ENCODE measurements at regions of chr6 and their contacts with region 1.

Region 1: DNA sequence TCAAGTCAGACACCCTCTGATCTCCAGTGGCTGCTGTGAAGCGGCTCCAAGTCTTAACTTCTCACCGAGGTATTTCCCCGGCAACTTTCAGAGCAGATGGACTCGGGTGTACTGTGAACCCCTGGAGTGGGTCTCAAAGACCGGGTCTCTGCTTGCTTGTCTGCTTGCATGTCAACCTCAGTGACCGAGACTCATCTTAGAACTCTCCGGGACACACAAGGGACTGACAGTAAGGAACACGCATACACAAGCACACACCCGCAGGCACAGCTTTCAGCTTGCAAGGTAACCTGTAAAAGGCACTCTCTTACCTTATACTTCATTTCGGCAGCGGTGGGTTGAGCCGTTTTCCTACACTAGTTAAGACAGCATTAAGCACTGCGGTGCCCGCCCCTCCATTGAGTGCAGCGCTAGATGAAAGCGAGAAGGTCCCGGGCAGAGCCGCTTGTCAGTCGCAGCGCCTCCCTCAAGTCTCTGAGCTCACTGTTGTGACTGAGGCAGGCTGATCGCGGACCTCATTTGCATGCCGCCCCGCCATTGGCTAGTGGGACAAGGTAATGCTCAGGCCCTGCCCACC is at the start of gene NEDD9:
- DNase-seq: peak; percentile 93
- H3K4me3 Mint-ChIP-seq: peak within 1 kb of the TSS; percentile 98
- H3K27ac Mint-ChIP-seq: peak within 1 kb of the TSS; percentile 96
- H3K4me1 Mint-ChIP-seq: peaks cover 86% of the 10 kb centered on the region
- H3K27me3 Mint-ChIP-seq: no peaks in the 10 kb centered on the region
- total RNA-seq, gene NEDD9: 53.2 and 62.1 TPM in 2 replicates

Region 2: GRCh38 chr6:10837995-10838793 is 394.1 kb before region 1 on chr6 and contains the start of gene MAK:
- intact Hi-C with region 1: loop called (anchors 2 kb)
- DNase-seq: peak; percentile 88
- H3K4me3 Mint-ChIP-seq: peak within 1 kb of the TSS; percentile 85
- H3K27ac Mint-ChIP-seq: peak within 1 kb of the TSS; percentile 99
- H3K4me1 Mint-ChIP-seq: peaks cover 23% of the 10 kb centered on the region
- H3K27me3 Mint-ChIP-seq: peaks cover 32% of the 10 kb centered on the region
- total RNA-seq, gene MAK: 0.67 and 0.73 TPM in 2 replicates

Region 3: GRCh38 chr6:11202513-11203305 is 29.6 kb before region 1 on chr6:
- intact Hi-C with region 1: loop called (anchors 1 kb)
- DNase-seq: peak; percentile 43
- H3K4me3 Mint-ChIP-seq: peak overlapping the region; percentile 54
- H3K27ac Mint-ChIP-seq: peak overlapping the region; percentile 92
- H3K4me1 Mint-ChIP-seq: peaks cover 86% of the 10 kb centered on the region
- H3K27me3 Mint-ChIP-seq: no peaks in the 10 kb centered on the region

Region 4: DNA sequence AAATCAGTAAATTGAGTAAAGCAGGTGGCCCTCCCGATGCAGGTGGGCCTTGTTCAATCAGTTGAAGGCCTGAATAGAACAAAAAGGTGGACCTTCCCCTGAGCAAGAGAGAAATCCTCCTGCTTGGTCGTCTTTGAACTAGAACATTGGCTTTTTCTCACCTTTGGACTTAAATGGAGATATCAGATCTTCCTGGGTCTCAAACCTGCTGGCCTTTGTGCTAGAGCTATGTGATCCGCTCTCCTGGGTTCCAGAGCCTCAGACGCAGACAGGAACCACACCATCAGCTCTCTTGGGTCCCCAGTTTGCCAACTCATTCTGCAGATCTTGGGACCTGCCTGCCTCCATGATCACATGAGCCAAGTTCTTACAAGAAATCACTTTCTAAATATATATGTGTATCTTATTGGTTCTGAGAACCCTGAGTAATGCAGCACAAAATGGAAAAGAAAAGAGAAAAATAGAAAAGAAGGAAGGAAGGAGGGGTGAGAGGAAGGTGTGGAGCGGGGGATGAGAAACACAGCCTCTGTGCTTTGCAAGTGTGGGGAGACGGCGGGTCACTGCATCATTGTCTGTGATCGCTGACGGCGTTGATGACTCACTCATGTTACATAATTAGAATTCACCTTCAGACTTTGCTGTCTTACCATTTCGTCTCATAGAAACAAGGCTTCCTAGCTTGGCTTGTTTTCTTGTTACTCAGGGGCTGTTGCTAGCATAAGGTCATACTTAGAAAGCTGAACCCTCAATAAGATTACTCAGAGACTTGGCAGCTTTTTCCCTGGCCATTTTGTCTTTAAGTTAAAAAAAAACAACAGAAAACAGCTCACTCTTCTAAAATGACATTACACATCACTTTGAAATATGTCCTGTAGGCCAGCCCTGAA is 85.8 kb after region 1 on chr6:
- intact Hi-C with region 1: loop called (anchors 1 kb)
- DNase-seq: peak; percentile 63
- H3K4me3 Mint-ChIP-seq: no peak overlapping the region
- H3K27ac Mint-ChIP-seq: peak overlapping the region; percentile 92
- H3K4me1 Mint-ChIP-seq: peaks cover 64% of the 10 kb centered on the region
- H3K27me3 Mint-ChIP-seq: no peaks in the 10 kb centered on the region

Region 5: GRCh38 chr6:11366183-11366933 is 134.1 kb after region 1 on chr6:
- intact Hi-C with region 1: loop called (anchors 1 kb)
- DNase-seq: peak; percentile 60
- H3K4me3 Mint-ChIP-seq: peak overlapping the region; percentile 55
- H3K27ac Mint-ChIP-seq: peak overlapping the region; percentile 92
- H3K4me1 Mint-ChIP-seq: peaks cover 95% of the 10 kb centered on the region
- H3K27me3 Mint-ChIP-seq: no peaks in the 10 kb centered on the region

Region 6: DNA sequence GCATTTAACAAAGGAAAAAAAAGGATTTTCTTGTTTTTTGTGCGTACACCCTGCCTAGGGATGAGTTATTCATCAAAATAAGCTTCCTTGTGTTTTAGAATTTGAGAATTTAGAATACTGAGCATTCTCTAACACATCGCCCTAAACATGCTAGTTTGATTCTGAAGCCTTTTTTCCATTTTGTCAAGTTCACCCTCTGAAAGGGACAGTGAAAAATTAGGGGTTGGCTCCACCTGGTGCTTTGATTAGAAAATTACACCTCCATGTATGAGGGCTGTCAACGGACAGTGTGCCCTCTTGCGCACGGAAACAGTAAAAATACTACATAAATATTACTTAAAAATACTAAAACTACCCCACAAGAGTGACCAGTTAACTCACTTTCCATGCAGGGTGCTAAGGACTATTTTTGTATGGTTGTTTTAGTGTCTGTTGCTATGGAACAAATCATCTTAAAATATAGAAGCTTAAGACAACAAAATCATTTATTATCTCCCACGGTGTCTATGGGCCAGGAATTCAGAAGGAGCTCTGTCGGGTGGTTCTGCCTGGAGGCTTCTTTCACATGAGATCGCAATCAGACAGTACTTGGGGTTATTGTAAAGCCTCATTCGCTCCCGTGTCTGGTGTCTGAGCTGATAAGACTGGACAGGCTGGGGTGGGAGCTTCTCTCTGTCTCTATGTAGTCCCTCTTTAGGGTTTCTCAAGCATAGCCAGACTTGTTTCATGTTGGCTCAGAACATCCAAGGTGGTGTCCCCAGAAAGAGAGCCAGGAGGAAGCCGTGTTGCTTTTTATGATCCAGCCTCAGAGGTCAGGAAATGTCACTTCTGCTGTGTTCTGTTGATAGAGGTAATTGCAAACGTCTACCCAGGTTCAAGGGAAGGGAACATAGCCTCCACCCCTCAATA is 264.1 kb after region 1 on chr6:
- intact Hi-C with region 1: loop called (anchors 1 kb)
- DNase-seq: peak; percentile 72
- H3K4me3 Mint-ChIP-seq: no peak overlapping the region
- H3K27ac Mint-ChIP-seq: no peak overlapping the region
- H3K4me1 Mint-ChIP-seq: peaks cover 26% of the 10 kb centered on the region
- H3K27me3 Mint-ChIP-seq: peaks cover 3% of the 10 kb centered on the region

Region 7: DNA sequence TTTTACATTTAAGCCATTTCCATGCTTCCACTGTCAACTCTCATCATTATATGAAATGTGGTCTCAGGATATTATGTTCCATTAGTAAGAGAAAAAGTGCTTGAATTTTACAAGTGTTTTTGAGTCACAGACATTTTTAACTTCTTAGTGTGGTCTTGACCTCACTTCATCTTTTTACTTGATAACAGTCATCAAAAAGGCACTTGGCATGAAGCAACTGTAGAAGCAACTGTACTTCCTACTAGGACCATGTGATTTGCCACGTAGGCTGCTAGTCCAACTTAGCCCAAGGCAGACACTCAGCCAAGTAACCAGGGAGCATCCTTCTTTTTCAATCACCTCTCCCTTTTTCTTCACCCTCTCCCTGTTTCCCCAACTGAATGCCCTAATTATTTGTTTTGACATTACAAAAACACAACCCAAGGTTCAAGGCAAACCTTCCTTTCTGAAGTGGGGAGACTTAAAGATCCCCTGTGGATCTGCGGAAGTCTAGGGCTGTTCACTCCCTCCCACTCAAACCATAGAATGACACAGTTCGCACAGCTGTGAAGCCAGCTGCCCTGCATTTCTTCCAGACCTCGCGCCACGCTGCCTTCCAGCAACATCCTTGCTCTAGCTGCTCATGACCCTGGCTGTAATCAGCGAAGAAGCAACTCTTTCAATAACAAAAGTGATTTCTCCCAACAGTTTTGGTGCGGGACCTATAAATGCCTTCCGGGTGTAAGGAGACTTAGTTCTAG is 1529.3 kb after region 1 on chr6:
- intact Hi-C with region 1: no loop called
- DNase-seq: no peak
- H3K4me3 Mint-ChIP-seq: no peak overlapping the region
- H3K27ac Mint-ChIP-seq: no peak overlapping the region
- H3K4me1 Mint-ChIP-seq: no peaks in the 10 kb centered on the region
- H3K27me3 Mint-ChIP-seq: no peaks in the 10 kb centered on the region